Activated B cell treated with CpG ODN at 0.5 μM for 24 hours (primary cell): ENCODE measurements at regions of chr19 and their contacts with region 1.

Region 1: GRCh38 chr19:2302319-2303210 is 5.4 kb downstream of the LINGO3 start:
- DNase-seq: peak; percentile 44
- ATAC-seq: peak; percentile 60
- H3K4me3 Mint-ChIP-seq: peak overlapping the region; percentile 81
- H3K27ac Mint-ChIP-seq: peak overlapping the region; percentile 54
- H3K4me1 Mint-ChIP-seq: peaks cover 49% of the 10 kb centered on the region
- H3K27me3 Mint-ChIP-seq: peaks cover 3% of the 10 kb centered on the region
- CTCF ChIP-seq: no peak

Region 2: DNA sequence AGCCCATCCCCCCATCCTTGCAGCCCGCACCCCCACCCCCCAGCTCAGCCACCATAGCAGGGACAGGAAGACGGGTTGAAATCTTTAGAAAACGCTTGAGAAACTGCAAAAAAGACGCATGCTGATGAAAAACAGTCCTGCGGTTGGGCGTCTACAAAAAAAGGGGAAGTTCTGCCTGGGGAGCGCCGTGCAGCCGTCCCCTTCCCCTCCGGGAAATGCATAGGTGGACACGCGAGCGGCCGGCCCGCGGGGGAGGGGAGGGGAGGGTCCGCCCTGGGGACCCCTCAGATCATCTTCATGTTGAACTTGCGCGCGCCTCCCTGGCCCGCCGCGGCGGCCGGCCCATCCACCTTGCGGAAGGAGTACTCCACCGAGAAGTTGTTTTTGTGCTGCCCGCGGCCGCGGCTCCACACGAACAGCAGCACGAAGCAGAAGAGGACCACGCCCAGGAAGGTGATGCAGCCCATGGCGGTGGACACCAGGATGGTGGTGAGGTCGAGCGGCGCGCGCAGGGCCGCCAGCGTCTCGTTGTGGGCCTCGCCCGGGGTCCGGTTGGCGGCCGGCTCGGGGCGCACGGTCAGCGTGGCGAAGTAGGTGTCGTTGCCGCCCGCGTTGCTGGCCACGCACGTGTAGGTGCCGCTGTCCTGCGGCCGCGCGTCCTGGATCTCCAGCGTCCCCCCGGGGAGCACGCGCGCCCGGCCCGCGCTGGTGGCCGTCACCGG is 12.7 kb before region 1 on chr19:
- CTCF ChIA-PET with region 1: interaction called, 3 read pairs
- POLR2A ChIA-PET with region 1: interaction called, 18 read pairs
- intact Hi-C with region 1: loop called (anchors 2 kb)
- DNase-seq: peak; percentile 69
- ATAC-seq: peak; percentile 69
- H3K4me3 Mint-ChIP-seq: peak overlapping the region; percentile 90
- H3K27ac Mint-ChIP-seq: peak overlapping the region; percentile 90
- H3K4me1 Mint-ChIP-seq: peaks cover 54% of the 10 kb centered on the region
- H3K27me3 Mint-ChIP-seq: no peaks in the 10 kb centered on the region
- CTCF ChIP-seq: no peak

Region 3: GRCh38 chr19:2315818-2316353 is 13.3 kb after region 1 on chr19:
- CTCF ChIA-PET with region 1: no interaction called
- POLR2A ChIA-PET with region 1: interaction called, 48 read pairs
- intact Hi-C with region 1: loop called (anchors 2 kb)
- DNase-seq: peak; percentile 54
- ATAC-seq: peak; percentile 74
- H3K4me3 Mint-ChIP-seq: peak overlapping the region; percentile 59
- H3K27ac Mint-ChIP-seq: peak overlapping the region; percentile 82
- H3K4me1 Mint-ChIP-seq: peaks cover 55% of the 10 kb centered on the region
- H3K27me3 Mint-ChIP-seq: no peaks in the 10 kb centered on the region
- CTCF ChIP-seq: no peak

Region 4: DNA sequence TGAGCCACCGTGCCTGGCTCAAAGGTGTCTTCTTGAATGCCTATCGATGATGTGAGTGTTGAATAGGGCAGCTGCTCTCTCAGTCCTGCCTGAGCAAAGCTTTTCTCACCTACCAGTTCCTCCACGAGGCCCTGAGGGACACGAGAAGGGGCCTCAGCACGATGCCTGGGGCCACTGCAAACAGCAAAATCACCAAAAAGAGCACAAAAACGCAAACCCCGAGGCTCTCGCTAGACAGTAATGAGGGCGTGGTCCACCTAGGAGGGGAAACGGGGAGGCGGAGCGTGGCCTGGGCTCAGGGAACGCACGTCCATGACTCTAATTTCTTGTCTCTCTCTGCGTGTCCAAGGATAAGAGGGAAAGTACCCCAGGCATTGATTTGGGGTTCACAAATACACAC is 257.2 kb after region 1 on chr19:
- CTCF ChIA-PET with region 1: no interaction called
- POLR2A ChIA-PET with region 1: no interaction called
- intact Hi-C with region 1: no loop called
- DNase-seq: no peak
- ATAC-seq: no peak
- H3K4me3 Mint-ChIP-seq: no peak overlapping the region
- H3K27ac Mint-ChIP-seq: peak overlapping the region; percentile 46
- H3K4me1 Mint-ChIP-seq: peaks cover 63% of the 10 kb centered on the region
- H3K27me3 Mint-ChIP-seq: no peaks in the 10 kb centered on the region
- CTCF ChIP-seq: no peak